ENCODE measurements at regions of chr14 and their contacts with region 1.

Region 1: DNA sequence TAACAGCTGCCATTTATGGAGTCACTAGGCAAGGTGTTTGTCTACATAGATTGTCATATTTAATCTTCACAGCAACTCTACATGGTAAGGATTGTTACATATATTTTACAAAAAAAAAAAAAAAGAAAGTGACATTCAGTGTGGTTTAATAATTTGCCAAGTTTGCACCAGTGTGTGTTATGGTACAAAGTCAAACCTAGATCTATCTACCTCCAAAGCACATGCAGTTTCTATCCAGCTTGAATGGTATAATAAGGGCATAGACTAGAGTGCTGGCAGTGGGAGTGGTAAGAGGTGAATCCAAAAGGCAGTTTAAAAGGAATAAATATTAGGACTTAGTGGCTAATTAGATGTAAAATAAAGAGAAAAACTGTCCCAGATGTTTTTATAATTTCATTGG is 66.2 kb upstream of the PCNX4 start:
- DNase-seq: no peak
- ATAC-seq: no peak
- H3K4me3 ChIP-seq: no peak overlapping the region
- H3K27ac ChIP-seq: no peak overlapping the region
- H3K4me1 ChIP-seq: no peaks in the 10 kb centered on the region
- H3K27me3 ChIP-seq: peaks cover 19% of the 10 kb centered on the region
- CTCF ChIP-seq: no peak

Region 2: DNA sequence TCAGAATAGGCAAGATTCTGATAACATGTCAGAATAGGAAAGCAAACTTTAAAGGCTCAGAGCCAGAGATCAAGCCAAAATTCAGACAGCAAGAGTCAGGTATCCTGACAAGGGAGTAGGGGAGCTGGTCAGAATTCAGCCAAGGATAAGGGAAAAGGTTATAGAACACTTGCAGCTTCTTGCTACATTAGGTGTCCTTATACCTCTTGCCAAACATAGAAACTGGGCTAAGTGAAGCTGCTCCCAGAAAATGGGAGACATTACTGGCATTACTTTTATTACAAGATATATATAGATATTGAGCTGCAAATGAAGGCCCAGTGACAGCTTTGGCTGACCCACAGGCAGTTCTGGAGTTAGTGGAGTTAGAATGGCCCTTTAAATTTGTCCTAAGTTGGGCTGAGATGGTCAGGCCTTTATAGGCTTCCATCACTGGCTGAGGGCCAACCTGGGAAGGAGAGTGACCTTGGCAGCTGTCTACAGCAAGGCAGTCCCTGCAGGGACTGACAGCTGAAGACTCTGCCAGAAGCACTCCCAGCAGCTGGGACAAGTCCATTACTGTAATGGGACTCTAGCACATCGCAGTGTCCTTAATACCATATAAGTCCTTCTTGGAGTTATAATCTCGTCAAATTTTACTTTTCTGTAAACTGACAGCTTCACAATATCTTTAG is 22.6 kb before region 1 on chr14:
- CTCF ChIA-PET with region 1: no interaction called
- POLR2A ChIA-PET with region 1: no interaction called
- intact Hi-C with region 1: no loop called
- DNase-seq: peak; percentile 42
- ATAC-seq: peak; percentile 37
- H3K4me3 ChIP-seq: no peak overlapping the region
- H3K27ac ChIP-seq: no peak overlapping the region
- H3K4me1 ChIP-seq: peaks cover 12% of the 10 kb centered on the region
- H3K27me3 ChIP-seq: no peaks in the 10 kb centered on the region
- CTCF ChIP-seq: no peak

Region 3: DNA sequence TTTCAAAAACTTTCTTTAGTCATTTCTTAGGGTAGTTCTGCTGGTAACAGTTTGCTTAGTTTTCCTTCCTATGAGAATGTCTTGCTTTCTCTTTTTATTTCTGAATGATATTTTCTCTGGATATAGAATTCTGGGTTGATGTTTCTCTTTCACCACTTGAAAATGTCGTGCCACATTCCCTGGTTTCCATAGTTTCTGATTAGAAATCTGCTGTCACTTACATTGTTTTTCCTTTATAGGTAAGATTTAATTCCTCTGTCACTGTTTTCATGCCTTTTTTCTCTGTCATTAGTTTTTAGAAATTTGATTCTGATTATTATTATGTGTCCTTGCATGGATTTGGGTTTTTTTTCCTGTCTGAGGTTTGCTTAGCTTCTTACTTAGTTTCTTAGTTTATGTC is 11.2 kb before region 1 on chr14:
- CTCF ChIA-PET with region 1: no interaction called
- POLR2A ChIA-PET with region 1: no interaction called
- intact Hi-C with region 1: loop called (anchors 2 kb)
- DNase-seq: no peak
- ATAC-seq: no peak
- H3K4me3 ChIP-seq: no peak overlapping the region
- H3K27ac ChIP-seq: no peak overlapping the region
- H3K4me1 ChIP-seq: no peaks in the 10 kb centered on the region
- H3K27me3 ChIP-seq: peaks cover 2% of the 10 kb centered on the region; the same call in 1 of the 2 replicates
- CTCF ChIP-seq: no peak

Region 4: DNA sequence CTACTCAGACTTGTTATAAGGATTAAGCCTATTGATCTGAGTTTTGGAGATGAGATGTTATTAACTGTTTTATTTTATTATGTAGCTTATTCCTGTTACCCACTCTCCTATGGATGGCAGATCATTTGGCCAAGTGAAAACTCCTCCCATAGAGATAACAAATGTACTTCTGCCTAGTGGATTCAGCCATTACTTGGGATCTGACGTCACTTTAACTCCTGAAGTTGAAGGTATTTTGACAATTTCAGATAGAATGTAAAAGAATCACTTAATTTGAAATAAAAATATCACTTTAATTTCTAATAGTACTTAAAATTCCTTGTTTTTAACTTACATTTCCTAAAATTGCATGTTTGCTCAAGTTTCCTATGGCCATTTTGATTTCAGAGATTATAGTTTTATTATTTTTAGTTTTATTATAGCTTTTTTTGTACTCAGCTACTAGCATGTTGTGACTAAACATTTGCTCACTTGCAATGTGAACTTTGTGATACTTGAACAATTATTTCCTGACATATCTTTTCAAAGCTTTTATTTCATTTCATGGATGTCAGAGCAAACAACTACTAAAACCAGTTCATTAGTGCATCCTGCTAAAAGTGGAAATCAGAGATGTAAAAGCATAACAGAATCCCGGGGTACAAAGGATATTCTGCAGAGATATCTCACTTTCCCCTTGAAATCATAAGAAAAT is 32.4 kb after region 1 on chr14:
- CTCF ChIA-PET with region 1: no interaction called
- POLR2A ChIA-PET with region 1: no interaction called
- intact Hi-C with region 1: loop called (anchors 5 kb)
- DNase-seq: peak; percentile 71
- ATAC-seq: peak; percentile 50
- H3K4me3 ChIP-seq: no peak overlapping the region
- H3K27ac ChIP-seq: no peak overlapping the region
- H3K4me1 ChIP-seq: peaks cover 34% of the 10 kb centered on the region
- H3K27me3 ChIP-seq: no peaks in the 10 kb centered on the region
- CTCF ChIP-seq: no peak

Region 5: GRCh38 chr14:60125918-60126317 is 100.3 kb after region 1 on chr14:
- CTCF ChIA-PET with region 1: no interaction called
- POLR2A ChIA-PET with region 1: no interaction called
- intact Hi-C with region 1: no loop called
- DNase-seq: no peak
- ATAC-seq: 0 out of 2 replicates have a peak, but pooled peaks have one; percentile 38
- H3K4me3 ChIP-seq: no peak overlapping the region
- H3K27ac ChIP-seq: no peak overlapping the region
- H3K4me1 ChIP-seq: no peaks in the 10 kb centered on the region
- H3K27me3 ChIP-seq: no peaks in the 10 kb centered on the region
- CTCF ChIP-seq: no peak

Measured in PC-3 (cell line).